ENCODE measurements at regions of chr10 and their contacts with region 1.

Region 1: DNA sequence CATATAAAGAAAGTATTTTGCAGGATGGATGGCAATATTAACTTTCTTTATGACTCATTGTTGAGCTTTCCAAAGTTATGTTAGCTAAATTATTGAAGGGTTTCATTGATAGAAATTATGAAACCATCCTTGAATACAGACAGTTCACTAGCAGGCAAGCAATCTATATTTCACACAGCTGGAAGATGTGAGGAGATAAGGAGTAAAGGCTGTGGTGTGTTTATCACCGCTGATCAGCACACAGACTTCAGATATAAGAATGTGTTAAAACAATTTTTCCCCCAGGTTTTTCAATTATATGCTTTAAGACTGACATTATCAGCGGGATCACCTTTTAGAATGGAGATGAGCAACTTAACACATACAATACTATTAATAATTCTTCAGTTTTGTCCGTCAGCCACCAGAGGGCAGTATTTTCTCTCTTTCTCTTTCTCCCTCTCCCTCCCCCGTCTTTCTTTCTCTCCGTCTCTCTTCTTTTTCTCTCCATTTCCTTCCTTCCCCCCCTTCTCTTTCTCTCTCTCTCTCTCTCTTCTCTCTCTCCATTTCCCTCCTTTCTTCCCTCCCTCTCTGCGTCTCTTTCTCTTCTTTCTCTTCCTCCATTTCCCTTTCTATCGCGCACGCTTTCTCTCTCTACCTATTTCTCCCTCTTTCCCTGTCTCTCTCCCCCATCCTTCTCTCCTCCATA is 62.9 kb upstream of the FAM171A1 start:
- DNase-seq: peak; percentile 47
- H3K4me3 ChIP-seq: peak overlapping the region; percentile 26 to 69 (median 52)
- H3K27ac ChIP-seq: no peak overlapping the region
- H3K4me1 ChIP-seq: peaks cover 5% of the 10 kb centered on the region
- H3K27me3 ChIP-seq: peaks cover 0 to 4% of the 10 kb centered on the region in 2 experiments
- CTCF ChIP-seq: peak; percentile 51 to 59
- POLR2A ChIP-seq: no peak

Region 2: GRCh38 chr10:15585303-15585715 is 151.3 kb after region 1 on chr10:
- CTCF ChIA-PET with region 1: interaction called, 5 read pairs
- POLR2A ChIA-PET with region 1: no interaction called
- dilution Hi-C with region 1: no loop called
- intact Hi-C with region 1: loop called (anchors 2 kb)
- DNase-seq: peak; percentile 80
- H3K4me3 ChIP-seq: no peak overlapping the region
- H3K27ac ChIP-seq: no peak overlapping the region
- H3K4me1 ChIP-seq: peaks cover 9% of the 10 kb centered on the region
- H3K27me3 ChIP-seq: no peaks in the 10 kb centered on the region
- CTCF ChIP-seq: peak; percentile 89 to 93
- POLR2A ChIP-seq: no peak

Region 3: DNA sequence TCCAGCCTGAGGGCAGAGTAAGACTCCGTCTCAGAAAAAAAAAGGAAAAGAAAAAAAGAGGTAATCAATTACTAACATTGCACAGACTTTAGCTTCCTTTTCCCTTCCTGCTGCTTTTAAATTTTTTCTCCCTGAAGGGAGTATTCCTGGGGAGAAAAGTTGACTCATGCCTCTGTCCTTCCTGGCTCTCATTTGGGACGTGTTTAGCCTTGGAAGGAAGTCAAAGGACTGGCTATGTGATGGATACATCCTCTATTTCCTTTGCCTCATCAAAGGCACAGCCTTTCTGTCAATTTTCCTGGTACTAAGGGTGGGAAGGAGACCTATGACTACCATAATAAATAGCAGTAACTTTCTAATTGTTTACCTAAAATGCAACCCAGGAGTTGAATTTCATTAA is 208.1 kb after region 1 on chr10:
- CTCF ChIA-PET with region 1: interaction called, 3 read pairs
- POLR2A ChIA-PET with region 1: no interaction called
- dilution Hi-C with region 1: no loop called
- intact Hi-C with region 1: loop called (anchors 5 kb)
- DNase-seq: peak; percentile 67
- H3K4me3 ChIP-seq: no peak overlapping the region
- H3K27ac ChIP-seq: no peak overlapping the region
- H3K4me1 ChIP-seq: peaks cover 8% of the 10 kb centered on the region
- H3K27me3 ChIP-seq: no peaks in the 10 kb centered on the region
- CTCF ChIP-seq: no peak
- POLR2A ChIP-seq: no peak

Region 4: GRCh38 chr10:15725603-15726002 is 291.6 kb after region 1 on chr10:
- CTCF ChIA-PET with region 1: interaction called, 57 read pairs
- POLR2A ChIA-PET with region 1: no interaction called
- dilution Hi-C with region 1: no loop called
- intact Hi-C with region 1: loop called (anchors 1 kb)
- DNase-seq: peak; percentile 49
- H3K4me3 ChIP-seq: no peak overlapping the region
- H3K27ac ChIP-seq: no peak overlapping the region
- H3K4me1 ChIP-seq: no peaks in the 10 kb centered on the region
- H3K27me3 ChIP-seq: peaks cover 17% of the 10 kb centered on the region in 2 experiments
- CTCF ChIP-seq: peak; percentile 51 to 60
- POLR2A ChIP-seq: no peak

Region 5: DNA sequence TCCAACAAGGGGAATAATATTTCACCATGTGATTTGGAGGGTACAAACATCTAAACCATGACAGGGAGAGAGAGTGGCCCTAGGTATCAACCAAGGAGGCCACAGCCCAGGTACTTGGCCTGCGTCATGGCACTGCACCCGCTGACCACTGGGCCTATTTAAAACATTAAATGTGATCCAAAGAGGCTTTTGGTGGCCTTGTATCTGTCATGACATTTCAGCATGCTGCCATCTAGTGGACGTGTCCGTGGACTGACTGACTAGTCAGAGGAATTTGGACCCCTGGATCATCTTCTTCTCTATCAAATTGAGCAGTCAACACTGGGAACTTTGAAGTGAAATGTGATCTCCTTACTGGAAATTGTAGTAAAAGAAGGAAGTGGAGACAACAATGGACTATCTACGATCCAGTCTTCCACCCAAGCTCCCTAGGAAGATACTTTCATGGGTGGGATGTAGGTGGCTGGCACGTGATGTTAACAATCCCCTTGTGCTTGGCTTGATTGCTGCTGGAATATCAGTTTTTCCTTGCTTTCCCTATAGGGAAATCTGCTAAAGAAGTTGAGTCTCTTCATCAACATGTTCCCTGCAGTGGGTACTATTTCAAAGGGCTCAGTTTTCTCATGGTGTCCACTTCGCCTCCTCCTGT is 310.3 kb after region 1 on chr10:
- CTCF ChIA-PET with region 1: interaction called, 3 read pairs
- POLR2A ChIA-PET with region 1: no interaction called
- dilution Hi-C with region 1: no loop called
- intact Hi-C with region 1: loop called (anchors 1 kb)
- DNase-seq: peak; percentile 58
- H3K4me3 ChIP-seq: no peak overlapping the region
- H3K27ac ChIP-seq: no peak overlapping the region
- H3K4me1 ChIP-seq: no peaks in the 10 kb centered on the region
- H3K27me3 ChIP-seq: peaks cover 7 to 11% of the 10 kb centered on the region in 2 experiments
- CTCF ChIP-seq: peak; percentile 63 to 73
- POLR2A ChIP-seq: no peak

Region 6: GRCh38 chr10:15824498-15824897 is 390.5 kb after region 1 on chr10:
- CTCF ChIA-PET with region 1: interaction called, 6 read pairs
- POLR2A ChIA-PET with region 1: no interaction called
- dilution Hi-C with region 1: no loop called
- intact Hi-C with region 1: loop called (anchors 1 kb)
- DNase-seq: peak; percentile 58
- H3K4me3 ChIP-seq: no peak overlapping the region
- H3K27ac ChIP-seq: no peak overlapping the region
- H3K4me1 ChIP-seq: no peaks in the 10 kb centered on the region
- H3K27me3 ChIP-seq: no peaks in the 10 kb centered on the region
- CTCF ChIP-seq: peak in 1 of 2 donors; percentile 11
- POLR2A ChIP-seq: no peak